H1 (cell line): ENCODE measurements at regions of chr12 and their contacts with region 1.

Region 1: GRCh38 chr12:65287426-65287825 is 8.9 kb downstream of the MSRB3 start:
- DNase-seq: no peak
- H3K4me3 ChIP-seq: no peak overlapping the region
- H3K27ac ChIP-seq: no peak overlapping the region
- H3K4me1 ChIP-seq: no peaks in the 10 kb centered on the region
- H3K27me3 ChIP-seq: no peaks in the 10 kb centered on the region; a peak in 1 of 7 replicates
- CTCF ChIP-seq: no peak
- EP300 ChIP-seq: no peak
- POLR2A ChIP-seq: no peak
- RAD21 ChIP-seq: no peak

Region 2: GRCh38 chr12:65238609-65239008 is 48.8 kb before region 1 on chr12:
- CTCF ChIA-PET with region 1: no interaction called
- POLR2A ChIA-PET with region 1: no interaction called
- DNase-seq: no peak
- H3K4me3 ChIP-seq: no peak overlapping the region
- H3K27ac ChIP-seq: no peak overlapping the region
- H3K4me1 ChIP-seq: no peaks in the 10 kb centered on the region
- H3K27me3 ChIP-seq: no peaks in the 10 kb centered on the region
- CTCF ChIP-seq: no peak
- EP300 ChIP-seq: no peak
- POLR2A ChIP-seq: no peak
- RAD21 ChIP-seq: no peak

Region 3: GRCh38 chr12:65263777-65264176 is 23.6 kb before region 1 on chr12:
- CTCF ChIA-PET with region 1: no interaction called
- POLR2A ChIA-PET with region 1: no interaction called
- DNase-seq: no peak
- H3K4me3 ChIP-seq: no peak overlapping the region
- H3K27ac ChIP-seq: no peak overlapping the region
- H3K4me1 ChIP-seq: no peaks in the 10 kb centered on the region
- H3K27me3 ChIP-seq: no peaks in the 10 kb centered on the region
- CTCF ChIP-seq: no peak
- EP300 ChIP-seq: no peak
- POLR2A ChIP-seq: no peak
- RAD21 ChIP-seq: no peak

Region 4: DNA sequence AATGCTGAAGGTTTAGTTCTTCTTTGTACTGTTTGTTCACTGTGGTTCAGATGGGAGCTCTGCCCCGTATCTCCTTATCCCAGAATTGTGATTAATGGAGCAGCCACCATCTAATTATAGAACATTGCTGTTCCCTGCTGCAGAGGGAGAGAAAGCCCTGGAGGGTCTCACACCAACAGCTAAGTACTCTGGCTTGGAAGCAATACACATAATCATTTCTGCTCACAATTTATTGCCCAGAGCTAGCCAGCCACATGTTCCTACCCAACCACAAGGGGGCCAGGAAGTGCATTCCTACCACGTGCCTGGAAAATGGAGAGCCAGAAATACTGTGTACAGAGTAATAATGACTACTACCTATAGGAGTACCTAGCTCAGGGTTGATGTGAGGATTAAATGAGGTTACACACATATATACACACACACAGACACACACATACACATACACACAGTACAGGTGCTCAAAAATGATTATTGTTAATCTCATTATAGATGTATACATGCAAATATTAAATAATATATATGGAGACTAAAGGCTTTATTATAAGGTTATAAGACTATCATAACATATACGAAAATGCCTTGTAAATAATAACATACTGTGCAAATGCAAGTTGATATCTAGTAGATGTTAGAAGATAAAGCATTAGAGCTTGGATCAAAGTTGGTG is 13.4 kb after region 1 on chr12:
- CTCF ChIA-PET with region 1: interaction called, 20 read pairs
- POLR2A ChIA-PET with region 1: no interaction called
- DNase-seq: no peak
- H3K4me3 ChIP-seq: no peak overlapping the region
- H3K27ac ChIP-seq: no peak overlapping the region
- H3K4me1 ChIP-seq: no peaks in the 10 kb centered on the region
- H3K27me3 ChIP-seq: no peaks in the 10 kb centered on the region
- CTCF ChIP-seq: peak; percentile 63 to 75 (median 71)
- EP300 ChIP-seq: no peak
- POLR2A ChIP-seq: no peak
- RAD21 ChIP-seq: peak; percentile 46 to 60